Activated T-helper 1 cell treated with anti-CD3 and anti-CD28 coated beads, Interleukin-12 subunit alpha, Interleukin-12 subunit beta, Interleukin-2, Interleukin-4 antibody, amounts not matched to agents 30 ng/mL and 10 ng/mL and 1 ng/mL, durations not matched to agents 14 hours and 24 hours and 36 hours (primary cell): ENCODE measurements at regions of chr13 and their contacts with region 1.

Region 1: GRCh38 chr13:76980075-76980718 is 11.7 kb upstream of the CLN5 start:
- DNase-seq: peak; percentile 73
- H3K4me3 Mint-ChIP-seq: no peak overlapping the region
- H3K27ac Mint-ChIP-seq: no peak overlapping the region
- H3K4me1 Mint-ChIP-seq: peaks cover 11% of the 10 kb centered on the region
- H3K27me3 Mint-ChIP-seq: peaks cover 29% of the 10 kb centered on the region

Region 2: GRCh38 chr13:75876360-75877050 is 1103.7 kb before region 1 on chr13:
- intact Hi-C with region 1: loop called (anchors 1 kb)
- DNase-seq: peak; percentile 27
- H3K4me3 Mint-ChIP-seq: no peak overlapping the region
- H3K27ac Mint-ChIP-seq: no peak overlapping the region
- H3K4me1 Mint-ChIP-seq: peaks cover 17% of the 10 kb centered on the region
- H3K27me3 Mint-ChIP-seq: peaks cover 8% of the 10 kb centered on the region

Region 3: GRCh38 chr13:76828316-76828741 is 151.9 kb before region 1 on chr13:
- intact Hi-C with region 1: loop called (anchors 2 kb)
- DNase-seq: no peak
- H3K4me3 Mint-ChIP-seq: no peak overlapping the region
- H3K27ac Mint-ChIP-seq: no peak overlapping the region
- H3K4me1 Mint-ChIP-seq: peaks cover 4% of the 10 kb centered on the region
- H3K27me3 Mint-ChIP-seq: peaks cover 2% of the 10 kb centered on the region

Region 4: GRCh38 chr13:76886292-76887075 is 93.7 kb before region 1 on chr13 and contains the start of gene KCTD12:
- intact Hi-C with region 1: no loop called
- DNase-seq: peak; percentile 60
- H3K4me3 Mint-ChIP-seq: peak within 1 kb of the TSS; percentile 90
- H3K27ac Mint-ChIP-seq: peak within 1 kb of the TSS; percentile 85
- H3K4me1 Mint-ChIP-seq: peaks cover 28% of the 10 kb centered on the region
- H3K27me3 Mint-ChIP-seq: peaks cover 28% of the 10 kb centered on the region
- total RNA-seq, gene KCTD12: 10.4 and 10.7 TPM in 2 replicates